RWPE1 (cell line): ENCODE measurements at regions of chr9 and their contacts with region 1.

Region 1: GRCh38 chr9:17330097-17330496 is 195.3 kb downstream of the CNTLN start:
- DNase-seq: peak; percentile 14
- H3K27ac ChIP-seq: no peak overlapping the region
- CTCF ChIP-seq: no peak

Region 2: GRCh38 chr9:17219261-17219660 is 110.8 kb before region 1 on chr9:
- CTCF ChIA-PET with region 1: no interaction called
- POLR2A ChIA-PET with region 1: no interaction called
- DNase-seq: no peak
- H3K27ac ChIP-seq: no peak overlapping the region
- CTCF ChIP-seq: peak; percentile 27

Region 3: GRCh38 chr9:17491780-17492179 is 161.7 kb after region 1 on chr9:
- CTCF ChIA-PET with region 1: no interaction called
- POLR2A ChIA-PET with region 1: interaction called, 12 read pairs
- DNase-seq: no peak
- H3K27ac ChIP-seq: no peak overlapping the region
- CTCF ChIP-seq: no peak

Region 4: DNA sequence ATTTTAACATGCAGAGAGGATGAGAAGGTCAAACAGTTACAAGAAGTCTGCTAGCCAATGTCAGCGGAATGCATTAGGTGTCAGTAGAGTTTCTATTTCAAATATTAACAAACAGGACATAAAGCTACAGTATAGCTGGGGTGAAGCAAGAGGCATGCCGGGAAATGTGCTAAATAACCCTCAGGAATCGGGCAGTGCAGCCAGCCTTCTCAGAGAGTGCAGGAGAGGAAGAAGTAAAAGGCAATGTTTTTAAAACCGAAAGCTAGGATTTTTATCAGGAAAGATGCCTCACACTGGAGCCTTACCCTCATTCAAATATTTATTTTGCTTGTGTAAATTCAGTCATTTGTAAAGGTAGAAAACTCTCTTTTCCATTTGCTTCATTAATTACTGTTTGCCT is 189.7 kb after region 1 on chr9:
- CTCF ChIA-PET with region 1: no interaction called
- POLR2A ChIA-PET with region 1: no interaction called
- DNase-seq: no peak
- H3K27ac ChIP-seq: no peak overlapping the region
- CTCF ChIP-seq: no peak